ENCODE measurements at regions of chr1 and their contacts with region 1.

Region 1: DNA sequence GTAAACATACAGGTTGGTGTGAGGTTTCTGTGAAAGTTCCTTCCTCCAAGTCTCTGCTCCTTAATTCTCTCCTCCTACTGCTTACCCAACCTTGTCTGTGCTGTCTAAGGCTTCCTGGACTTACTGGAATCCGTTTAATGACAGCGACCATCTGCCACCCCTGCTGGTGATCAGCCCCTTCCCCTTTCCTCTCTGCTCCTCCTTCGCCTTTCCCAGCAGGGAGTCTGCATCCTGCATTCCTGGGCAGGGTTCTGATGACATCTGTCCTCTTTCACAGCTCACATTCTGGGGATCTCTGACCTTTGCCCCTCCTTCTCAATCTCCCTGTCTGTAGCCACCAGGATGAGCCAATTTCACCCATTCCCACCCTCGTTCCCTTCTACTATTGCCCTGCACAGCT is 66.5 kb downstream of the KIRREL1 start:
- DNase-seq: no peak
- H3K4me3 ChIP-seq: no peak overlapping the region
- CTCF ChIP-seq: no peak

Region 2: DNA sequence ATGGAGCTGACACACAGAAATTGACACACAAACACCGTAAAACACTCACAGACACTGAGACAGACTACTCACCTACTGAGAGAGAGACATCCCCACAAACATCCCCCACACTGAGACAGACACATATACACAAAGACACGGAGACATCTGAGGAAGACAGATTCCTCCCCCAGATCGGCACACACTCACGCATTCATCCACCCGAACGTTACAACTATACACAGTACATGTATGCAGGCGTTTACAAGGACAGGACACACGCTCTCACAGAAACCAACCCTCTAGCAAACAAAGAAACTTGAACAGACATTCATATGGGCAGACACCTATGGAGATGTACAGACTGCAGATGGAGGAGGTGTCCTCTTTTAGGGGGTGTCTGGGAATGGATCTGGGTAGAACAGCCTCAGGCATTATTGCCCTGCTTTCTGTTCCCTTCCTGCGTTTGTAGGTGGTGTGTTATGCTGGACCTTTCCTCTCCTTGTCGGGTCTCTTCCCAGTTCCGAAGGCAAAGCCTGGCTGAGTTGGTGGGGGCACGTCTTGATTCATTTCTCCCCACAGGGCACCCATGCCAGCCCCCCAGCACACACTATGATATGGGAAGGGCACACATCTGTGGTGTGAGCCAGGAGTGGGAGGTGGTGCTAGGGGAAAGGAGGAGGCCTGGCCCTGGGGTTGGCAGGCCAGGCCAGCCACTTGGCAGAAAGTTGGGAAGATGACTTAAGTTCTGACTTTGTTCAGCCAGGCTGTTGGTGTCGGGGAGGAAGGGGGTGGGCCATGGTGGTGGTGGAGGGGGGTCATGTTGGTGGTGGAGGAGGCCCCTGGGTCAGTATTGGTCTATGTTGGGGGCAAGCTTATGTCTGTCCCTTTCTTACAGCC is 65.0 kb before region 1 on chr1:
- in situ Hi-C with region 1: loop called (anchors 5 kb)
- DNase-seq: no peak
- H3K4me3 ChIP-seq: peak overlapping the region; percentile 97
- CTCF ChIP-seq: no peak